ENCODE measurements at regions of chr7 and their contacts with region 1.

Region 1: DNA sequence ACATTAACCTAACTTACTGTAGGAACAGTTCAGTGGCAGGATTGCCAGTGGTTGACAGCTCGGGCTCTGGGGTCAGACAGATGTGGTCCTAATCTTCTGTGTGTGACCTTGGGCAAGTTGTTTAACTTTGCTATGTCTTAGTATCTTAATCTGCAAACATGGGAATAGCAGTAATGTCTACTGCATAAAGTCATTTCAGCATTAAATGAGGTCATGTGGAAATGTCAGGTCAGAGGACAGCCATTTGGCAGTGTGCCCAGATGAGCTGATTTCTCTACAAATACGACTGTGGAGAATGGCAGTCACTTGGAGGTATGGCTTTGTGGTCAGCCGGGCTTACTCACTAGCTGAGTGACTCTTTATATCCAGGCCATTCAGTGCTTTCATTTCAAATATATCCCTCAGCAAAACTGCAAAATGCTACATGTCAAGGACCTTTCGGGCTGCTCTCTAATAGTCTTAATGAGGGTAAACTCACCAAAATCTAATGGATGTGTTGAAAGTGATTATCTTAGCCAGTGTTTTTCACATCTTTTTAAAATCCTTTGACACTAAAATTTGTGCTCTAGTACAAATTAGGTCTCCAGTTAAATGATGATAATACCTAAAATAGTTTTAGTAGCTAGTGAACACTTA is 171.4 kb downstream of the ST7 start:
- DNase-seq: peak; percentile 94

Region 2: DNA sequence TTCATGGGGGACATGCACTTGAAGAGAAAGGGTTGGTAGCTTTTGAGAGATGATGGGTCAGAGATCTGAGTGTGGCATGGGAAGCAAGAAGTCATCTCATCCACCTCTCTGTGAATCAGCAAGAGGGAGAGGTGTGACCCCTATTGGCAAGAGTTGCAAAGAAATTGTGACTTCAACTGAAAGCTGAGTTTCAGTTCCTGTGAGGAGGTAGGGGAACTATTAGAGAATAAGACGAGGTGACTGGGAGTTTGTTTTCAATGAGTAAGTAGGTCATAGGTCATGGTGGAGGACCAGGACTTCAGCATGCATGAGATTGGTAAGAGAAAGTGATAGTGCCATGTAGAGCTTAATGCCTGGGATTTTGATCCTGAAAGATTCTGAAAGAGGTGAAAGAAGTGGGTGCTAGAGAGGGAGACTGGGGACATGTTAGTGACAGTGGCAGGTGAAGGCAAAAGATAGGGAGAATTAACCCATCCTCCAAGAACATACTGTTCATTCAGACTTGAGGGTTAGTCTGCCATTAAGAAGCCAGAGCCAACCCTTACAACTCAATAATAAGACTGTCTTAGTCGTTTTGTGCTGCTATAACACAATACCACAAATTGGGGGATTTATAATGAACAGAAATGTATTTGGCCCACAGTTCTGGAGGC is 337.8 kb before region 1 on chr7:
- intact Hi-C with region 1: no loop called
- DNase-seq: no peak

Region 3: DNA sequence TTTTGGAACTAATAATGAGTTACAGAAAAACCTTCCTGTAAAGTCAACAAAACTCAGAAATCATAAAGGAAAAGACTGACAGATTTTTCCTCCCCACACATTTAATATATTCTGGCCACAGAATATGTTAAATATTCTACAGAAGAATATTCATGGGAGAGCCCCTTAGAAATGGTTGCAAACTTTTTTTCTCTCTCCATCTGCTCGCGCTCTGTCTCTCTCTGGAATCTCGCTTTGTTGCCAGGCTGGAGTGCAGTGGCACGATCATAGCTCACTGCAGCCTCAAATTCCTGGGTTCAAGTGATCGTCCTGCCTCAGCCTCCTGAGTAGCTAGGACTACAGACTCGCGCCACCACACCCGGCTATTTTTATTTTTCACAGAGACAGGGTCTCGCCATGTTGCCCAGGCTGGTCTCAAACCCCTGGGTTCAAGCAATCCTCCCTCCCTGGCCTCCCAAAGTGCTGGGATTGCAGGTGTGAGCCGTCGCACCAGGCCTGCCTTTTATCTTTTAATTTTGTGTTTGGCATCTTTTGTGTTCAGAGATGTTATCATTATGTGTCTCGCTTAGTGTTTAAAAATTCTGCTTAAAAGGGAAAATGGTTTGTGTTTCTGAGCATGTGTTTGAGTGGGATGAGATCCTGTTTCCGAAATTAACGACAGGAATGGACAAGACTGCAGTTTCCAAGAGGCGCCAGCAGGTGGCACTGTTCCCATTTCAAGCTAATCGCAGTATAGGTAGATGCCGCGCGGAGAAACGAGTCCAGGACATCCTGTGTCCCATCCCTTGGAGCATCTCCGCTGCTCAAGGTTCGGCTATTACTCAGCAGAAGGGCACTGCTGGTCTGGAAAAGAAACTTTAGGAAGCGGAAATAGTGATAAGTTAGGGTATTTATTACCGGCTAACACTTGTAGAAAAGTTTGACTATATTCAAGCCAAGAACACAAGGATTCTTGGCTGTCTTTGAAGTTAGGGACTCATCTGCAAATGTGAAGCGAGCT is 194.5 kb before region 1 on chr7:
- intact Hi-C with region 1: loop called in 1 of 2 experiments (anchors 5 kb)
- DNase-seq: peak; percentile 95

Region 4: GRCh38 chr7:116984917-116985316 is 139.8 kb before region 1 on chr7:
- intact Hi-C with region 1: loop called in 1 of 2 experiments (anchors 5 kb)
- DNase-seq: no peak

Region 5: DNA sequence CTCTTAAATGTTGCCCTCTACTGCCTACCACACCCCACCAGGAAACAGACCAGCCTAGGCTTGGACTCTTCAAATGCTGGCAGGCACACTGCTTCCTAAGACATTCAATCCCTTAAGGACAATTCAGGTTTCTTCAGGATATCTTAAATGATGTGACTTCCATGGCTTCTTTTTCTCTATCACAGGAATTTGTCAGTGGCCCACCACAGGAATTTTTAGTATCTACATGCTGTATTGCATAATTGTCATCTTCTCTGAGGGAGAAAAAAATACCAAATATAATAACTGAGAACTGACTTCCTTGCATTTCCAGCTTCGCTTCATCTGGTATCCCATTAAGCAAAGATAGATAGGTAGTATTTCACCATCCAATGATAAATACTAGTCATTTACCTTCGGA is 68.9 kb after region 1 on chr7:
- intact Hi-C with region 1: no loop called
- DNase-seq: no peak